Vagina (tissue), 2 donors: ENCODE measurements at regions of chr1 and their contacts with region 1.

Region 1: GRCh38 chr1:8133657-8134430 is 107.7 kb upstream of the ERRFI1 start:
- DNase-seq: no peak
- H3K4me3 ChIP-seq: no peak overlapping the region
- H3K27ac ChIP-seq: peak overlapping the region; percentile 87
- H3K4me1 ChIP-seq: peaks cover 37% of the 10 kb centered on the region
- H3K27me3 ChIP-seq: no peaks in the 10 kb centered on the region
- CTCF ChIP-seq: no peak
- POLR2A ChIP-seq: no peak

Region 2: GRCh38 chr1:7961216-7962015 is 172.4 kb before region 1 on chr1 and contains the start of gene PARK7:
- intact Hi-C with region 1: no loop called
- DNase-seq: peak; percentile 98 to 99
- H3K4me3 ChIP-seq: peak within 1 kb of the TSS; percentile 66 to 91
- H3K27ac ChIP-seq: peak within 1 kb of the TSS; percentile 89
- H3K4me1 ChIP-seq: peaks cover 27% of the 10 kb centered on the region
- H3K27me3 ChIP-seq: no peaks in the 10 kb centered on the region
- CTCF ChIP-seq: peak; percentile 36 to 50 (median 46)
- POLR2A ChIP-seq: peak in 1 of 2 donors; percentile 66
- total RNA-seq, gene PARK7: 119 TPM

Region 3: GRCh38 chr1:8116893-8117264 is 17.0 kb before region 1 on chr1:
- intact Hi-C with region 1: loop called (anchors 2 kb)
- DNase-seq: no peak
- H3K4me3 ChIP-seq: no peak overlapping the region
- H3K27ac ChIP-seq: peak overlapping the region; percentile 84
- H3K4me1 ChIP-seq: peaks cover 66% of the 10 kb centered on the region
- H3K27me3 ChIP-seq: no peaks in the 10 kb centered on the region
- CTCF ChIP-seq: no peak
- POLR2A ChIP-seq: no peak

Region 4: GRCh38 chr1:8202182-8202905 is 68.5 kb after region 1 on chr1:
- intact Hi-C with region 1: loop called (anchors 5 kb)
- DNase-seq: no peak
- H3K4me3 ChIP-seq: no peak overlapping the region
- H3K27ac ChIP-seq: peak overlapping the region; percentile 88
- H3K4me1 ChIP-seq: peaks cover 51% of the 10 kb centered on the region
- H3K27me3 ChIP-seq: no peaks in the 10 kb centered on the region
- CTCF ChIP-seq: no peak
- POLR2A ChIP-seq: no peak